ENCODE measurements at regions of chr2 and their contacts with region 1.

Region 1: DNA sequence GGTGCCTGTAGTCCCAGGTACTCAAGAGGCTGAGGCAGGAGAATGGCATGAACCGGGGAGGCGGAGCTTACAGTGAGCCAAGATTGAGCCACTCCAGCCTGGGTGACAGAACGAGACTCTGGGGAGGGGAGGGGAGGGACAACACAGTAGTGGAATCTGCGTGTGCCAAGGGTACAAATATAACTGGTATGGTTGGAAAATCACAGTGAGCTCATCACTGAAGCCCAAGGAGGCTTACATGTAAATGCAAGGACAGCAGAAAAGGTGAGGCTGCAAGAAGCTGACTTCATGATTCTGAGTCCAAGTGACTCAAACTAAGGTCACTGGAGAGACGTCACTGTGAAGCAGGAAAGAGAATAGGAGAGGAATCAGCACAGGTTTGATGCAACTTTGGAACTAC is 9.2 kb downstream of the SEPTIN10 start:
- DNase-seq: no peak
- ATAC-seq: no peak
- H3K4me3 ChIP-seq: no peak overlapping the region
- H3K27ac ChIP-seq: peak overlapping the region; percentile 20; the same call in 1 of the 2 replicates
- H3K4me1 ChIP-seq: peaks cover 10% of the 10 kb centered on the region
- H3K27me3 ChIP-seq: no peaks in the 10 kb centered on the region
- CTCF ChIP-seq: no peak
- EP300 ChIP-seq: no peak
- POLR2A ChIP-seq: no peak
- RAD21 ChIP-seq: no peak

Region 2: DNA sequence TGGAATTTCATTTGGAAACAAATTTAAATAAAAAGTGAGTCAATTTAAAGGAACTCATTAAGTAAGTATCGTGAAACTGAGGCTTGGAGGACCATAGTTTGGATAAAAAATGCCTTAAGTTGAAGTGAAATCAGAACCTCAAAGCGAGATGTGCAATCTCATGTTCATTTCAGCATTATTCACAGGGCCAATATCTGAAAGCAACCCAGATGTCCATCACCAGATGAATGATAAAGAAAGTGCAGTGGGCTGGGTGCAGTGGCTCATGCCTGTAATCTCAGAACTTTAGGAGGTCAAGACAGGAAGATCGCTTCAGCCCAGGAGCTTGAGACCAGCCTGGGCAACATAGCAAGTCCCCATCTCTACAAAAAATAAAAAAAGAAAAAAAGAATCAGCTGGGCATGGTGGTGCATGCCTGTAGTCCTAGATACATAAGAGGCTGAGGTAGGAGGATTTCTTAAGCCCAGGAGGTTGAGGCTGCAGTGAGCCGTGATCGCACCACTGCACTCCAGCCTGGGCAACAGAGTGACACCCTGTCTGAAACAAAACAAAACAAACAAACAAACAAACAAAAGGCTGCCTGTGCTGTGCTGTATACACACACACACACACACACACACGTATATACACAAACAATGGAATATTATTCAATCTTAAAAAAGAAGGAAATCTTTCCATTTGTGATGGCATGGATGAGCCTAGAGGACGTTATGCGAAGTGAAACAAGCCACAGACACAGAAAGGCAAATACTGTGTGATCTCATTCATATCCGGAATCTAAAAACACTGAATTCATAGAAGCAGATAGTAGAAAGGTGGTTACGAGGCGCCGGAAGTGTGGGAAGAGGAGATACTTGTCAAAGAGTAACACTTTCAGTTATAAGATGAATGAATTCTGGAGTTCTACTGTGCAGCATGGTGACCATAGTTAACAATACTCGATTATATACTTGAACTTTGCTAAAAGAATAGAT is 461.1 kb before region 1 on chr2:
- CTCF ChIA-PET with region 1: no interaction called
- POLR2A ChIA-PET with region 1: no interaction called
- RAD21 ChIA-PET with region 1: no interaction called
- SMC1A ChIA-PET with region 1: no interaction called
- in situ Hi-C with region 1: no loop called
- intact Hi-C with region 1: loop called (anchors 10 kb)
- DNase-seq: peak; percentile 66
- ATAC-seq: peak; percentile 92
- H3K4me3 ChIP-seq: peak overlapping the region; percentile 38; the same call in 1 of the 2 replicates
- H3K27ac ChIP-seq: no peak overlapping the region; the same call in 1 of the 2 replicates
- H3K4me1 ChIP-seq: peaks cover 27% of the 10 kb centered on the region
- H3K27me3 ChIP-seq: peaks cover 0 to 3% of the 10 kb centered on the region in 2 experiments; a peak in 2 of 4 replicates
- CTCF ChIP-seq: no peak
- EP300 ChIP-seq: peak; percentile 56 to 80; a peak in 3 of 4 replicates
- POLR2A ChIP-seq: no peak
- RAD21 ChIP-seq: 0 out of 2 replicates have a peak, but pooled peaks have one; percentile 5

Region 3: GRCh38 chr2:109582928-109583895 is 21.4 kb before region 1 on chr2:
- CTCF ChIA-PET with region 1: interaction called, 5 read pairs
- POLR2A ChIA-PET with region 1: interaction called, 8 read pairs
- RAD21 ChIA-PET with region 1: interaction called, 34 read pairs
- SMC1A ChIA-PET with region 1: interaction called, 33 read pairs
- in situ Hi-C with region 1: no loop called
- intact Hi-C with region 1: loop called (anchors 2 kb)
- DNase-seq: peak; percentile 45
- ATAC-seq: peak; percentile 84
- H3K4me3 ChIP-seq: no peak overlapping the region
- H3K27ac ChIP-seq: peak overlapping the region; percentile 50
- H3K4me1 ChIP-seq: peaks cover 27% of the 10 kb centered on the region
- H3K27me3 ChIP-seq: no peaks in the 10 kb centered on the region
- CTCF ChIP-seq: no peak
- EP300 ChIP-seq: peak in 1 of 2 experiments; percentile 46; a peak in 1 of 4 replicates
- POLR2A ChIP-seq: no peak
- RAD21 ChIP-seq: no peak

Region 4: DNA sequence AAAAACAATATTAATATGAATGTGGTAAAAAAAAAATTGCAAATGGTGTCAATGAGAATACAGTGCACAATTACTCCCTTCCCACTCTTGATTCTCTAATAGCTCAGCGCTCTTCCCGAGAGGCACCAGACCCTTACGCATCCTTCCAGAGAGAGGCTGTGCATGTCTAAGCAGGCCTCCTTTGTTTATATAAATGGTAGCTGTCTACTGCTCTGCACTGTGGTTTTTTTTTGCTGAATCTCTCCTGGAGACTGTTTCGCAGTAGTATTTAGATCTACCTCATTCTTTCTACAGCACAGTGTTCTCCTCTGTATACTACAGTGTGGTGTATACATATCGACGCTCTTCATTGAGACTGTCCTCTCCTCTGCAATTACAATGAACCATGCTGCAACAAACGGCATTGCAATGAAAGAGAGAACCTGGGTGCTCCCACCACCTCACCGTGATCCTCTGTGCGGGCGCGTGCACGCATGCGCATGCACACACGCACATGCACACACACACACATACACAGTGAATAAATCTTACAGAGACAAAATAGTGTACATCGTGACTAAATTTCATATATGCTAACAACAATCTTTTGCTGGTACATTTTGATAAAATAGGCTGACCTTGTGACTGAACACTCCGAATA is 10.2 kb before region 1 on chr2:
- CTCF ChIA-PET with region 1: interaction called, 34 read pairs
- POLR2A ChIA-PET with region 1: interaction called, 9 read pairs
- RAD21 ChIA-PET with region 1: interaction called, 29 read pairs
- SMC1A ChIA-PET with region 1: interaction called, 74 read pairs
- in situ Hi-C with region 1: no loop called
- intact Hi-C with region 1: no loop called
- DNase-seq: no peak
- ATAC-seq: no peak
- H3K4me3 ChIP-seq: no peak overlapping the region
- H3K27ac ChIP-seq: no peak overlapping the region
- H3K4me1 ChIP-seq: peaks cover 16% of the 10 kb centered on the region
- H3K27me3 ChIP-seq: no peaks in the 10 kb centered on the region
- CTCF ChIP-seq: no peak
- EP300 ChIP-seq: no peak
- POLR2A ChIP-seq: no peak
- RAD21 ChIP-seq: no peak

Measured in GM12878 (cell line).